CD4-positive, alpha-beta memory T cell (primary cell): ENCODE measurements at regions of chr19 and their contacts with region 1.

Region 1: GRCh38 chr19:16185123-16185767 is at the start of gene FAM32A:
- DNase-seq: peak; percentile 98 to 99 (median 99)
- H3K4me3 ChIP-seq: peak within 1 kb of the TSS; percentile 84 to 86
- H3K4me3 Mint-ChIP-seq: peak within 1 kb of the TSS; percentile 97 to 100 (median 99)
- H3K27ac ChIP-seq: peak within 1 kb of the TSS; percentile 83
- H3K27ac Mint-ChIP-seq: peak within 1 kb of the TSS; percentile 95 to 99 (median 96)
- H3K4me1 ChIP-seq: peaks cover 43% of the 10 kb centered on the region
- H3K4me1 Mint-ChIP-seq: peaks cover 20 to 43% (median 31%) of the 10 kb centered on the region in 4 donors
- H3K27me3 ChIP-seq: no peaks in the 10 kb centered on the region
- H3K27me3 Mint-ChIP-seq: peaks cover 0 to 2% of the 10 kb centered on the region in 2 donors
- total RNA-seq, gene FAM32A: 50.9 to 51.7 TPM

Region 2: DNA sequence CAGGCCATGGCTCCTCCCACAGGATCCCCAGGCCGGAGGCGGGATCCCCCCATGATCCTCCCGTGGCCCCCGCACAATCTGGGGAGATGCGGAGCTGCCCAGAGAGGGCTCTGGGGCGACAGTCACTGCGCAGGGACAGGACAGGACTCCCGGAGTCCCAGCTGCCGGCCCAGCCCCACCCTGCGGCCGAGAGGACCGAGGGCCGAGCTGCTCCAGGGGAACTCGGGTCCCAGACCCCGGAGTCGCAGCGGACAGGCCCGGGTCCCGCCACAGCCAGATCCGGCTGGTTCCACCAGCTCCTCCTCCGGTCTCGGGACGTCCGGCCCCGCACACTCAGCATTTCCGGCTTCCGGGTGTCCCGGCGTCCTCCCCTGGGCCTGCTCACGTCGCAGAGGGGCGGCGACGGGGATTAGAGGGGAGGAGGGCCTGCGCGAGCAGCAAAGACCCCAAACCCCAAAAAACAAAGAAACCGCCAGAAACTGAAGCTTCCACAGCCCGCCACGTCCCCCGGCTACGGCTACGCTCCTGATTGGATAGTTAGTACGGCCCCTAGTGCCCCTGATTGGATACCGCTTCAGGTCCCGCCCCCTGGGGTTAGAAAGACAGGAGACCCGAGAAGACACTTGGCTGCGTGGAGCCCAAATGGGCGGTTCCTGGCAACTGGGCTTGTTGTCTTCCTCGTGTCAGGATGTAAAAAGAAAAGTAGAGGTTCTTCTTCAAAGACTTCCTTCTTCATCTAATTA is 348.5 kb before region 1 on chr19:
- CTCF ChIA-PET with region 1: no interaction called
- POLR2A ChIA-PET with region 1: interaction called, 15 read pairs
- intact Hi-C with region 1: loop called (anchors 2 kb)
- DNase-seq: peak; percentile 95 to 98 (median 96)
- H3K4me3 ChIP-seq: peak overlapping the region; percentile 63 to 69
- H3K4me3 Mint-ChIP-seq: peak overlapping the region; percentile 92 to 99 (median 96)
- H3K27ac ChIP-seq: peak overlapping the region; percentile 94
- H3K27ac Mint-ChIP-seq: peak overlapping the region; percentile 89 to 100 (median 98)
- H3K4me1 ChIP-seq: peaks cover 29% of the 10 kb centered on the region
- H3K4me1 Mint-ChIP-seq: peaks cover 17 to 36% (median 26%) of the 10 kb centered on the region in 4 donors
- H3K27me3 ChIP-seq: no peaks in the 10 kb centered on the region
- H3K27me3 Mint-ChIP-seq: no peaks in the 10 kb centered on the region

Region 3: GRCh38 chr19:16041299-16041990 is 143.8 kb before region 1 on chr19:
- CTCF ChIA-PET with region 1: interaction called, 27 read pairs
- POLR2A ChIA-PET with region 1: interaction called, 4 read pairs
- intact Hi-C with region 1: loop called (anchors 1 kb)
- DNase-seq: peak; percentile 60 to 75 (median 66)
- H3K4me3 ChIP-seq: no peak overlapping the region
- H3K4me3 Mint-ChIP-seq: peak overlapping the region in 6 of 8 donors; percentile 7 to 63 (median 29)
- H3K27ac ChIP-seq: no peak overlapping the region
- H3K27ac Mint-ChIP-seq: peak overlapping the region in 1 of 7 donors; percentile 29
- H3K4me1 ChIP-seq: peaks cover 10% of the 10 kb centered on the region
- H3K4me1 Mint-ChIP-seq: peaks cover 7 to 17% (median 12%) of the 10 kb centered on the region in 4 donors
- H3K27me3 ChIP-seq: no peaks in the 10 kb centered on the region
- H3K27me3 Mint-ChIP-seq: peaks cover 0 to 1% of the 10 kb centered on the region in 2 donors

Region 4: DNA sequence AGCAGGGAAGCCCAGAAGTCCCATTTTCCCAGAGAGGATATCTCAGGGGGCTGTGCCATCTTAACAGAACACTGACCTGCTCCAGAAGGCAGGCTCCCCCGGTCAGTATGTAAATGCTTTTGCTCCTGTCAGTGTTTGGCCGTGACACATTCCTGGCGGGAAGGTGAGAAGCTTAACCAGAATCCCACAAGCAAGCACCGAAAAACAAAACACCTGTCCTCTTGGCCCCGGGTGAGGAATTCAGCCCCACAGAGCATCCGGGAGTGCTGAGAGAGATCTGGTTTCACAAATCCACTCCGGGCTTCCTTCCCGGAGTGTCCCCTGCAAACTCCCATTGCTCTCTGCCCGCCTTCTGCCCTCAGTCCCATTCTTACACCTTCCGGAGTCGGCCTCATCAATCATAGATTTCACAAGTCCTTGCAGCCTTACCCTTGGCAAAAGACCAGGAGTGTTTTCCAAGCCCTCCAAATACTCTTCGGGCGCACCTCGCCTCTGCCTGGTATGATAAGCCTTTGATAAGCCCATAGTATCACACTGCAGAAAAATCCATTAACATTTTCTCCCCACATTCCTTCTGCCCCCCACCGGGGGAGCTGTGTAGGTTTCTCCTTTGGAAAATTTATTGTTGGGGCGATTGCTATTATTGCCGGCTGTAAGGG is 96.8 kb before region 1 on chr19:
- CTCF ChIA-PET with region 1: interaction called, 15 read pairs
- POLR2A ChIA-PET with region 1: interaction called, 8 read pairs
- intact Hi-C with region 1: no loop called
- DNase-seq: peak in 1 of 5 donors; percentile 10
- H3K4me3 ChIP-seq: no peak overlapping the region
- H3K4me3 Mint-ChIP-seq: peak overlapping the region in 4 of 8 donors; percentile 15 to 54 (median 34)
- H3K27ac ChIP-seq: no peak overlapping the region
- H3K27ac Mint-ChIP-seq: peak overlapping the region; percentile 61 to 82 (median 72)
- H3K4me1 ChIP-seq: peaks cover 53% of the 10 kb centered on the region
- H3K4me1 Mint-ChIP-seq: peaks cover 27 to 58% (median 36%) of the 10 kb centered on the region in 4 donors
- H3K27me3 ChIP-seq: no peaks in the 10 kb centered on the region
- H3K27me3 Mint-ChIP-seq: no peaks in the 10 kb centered on the region

Region 5: DNA sequence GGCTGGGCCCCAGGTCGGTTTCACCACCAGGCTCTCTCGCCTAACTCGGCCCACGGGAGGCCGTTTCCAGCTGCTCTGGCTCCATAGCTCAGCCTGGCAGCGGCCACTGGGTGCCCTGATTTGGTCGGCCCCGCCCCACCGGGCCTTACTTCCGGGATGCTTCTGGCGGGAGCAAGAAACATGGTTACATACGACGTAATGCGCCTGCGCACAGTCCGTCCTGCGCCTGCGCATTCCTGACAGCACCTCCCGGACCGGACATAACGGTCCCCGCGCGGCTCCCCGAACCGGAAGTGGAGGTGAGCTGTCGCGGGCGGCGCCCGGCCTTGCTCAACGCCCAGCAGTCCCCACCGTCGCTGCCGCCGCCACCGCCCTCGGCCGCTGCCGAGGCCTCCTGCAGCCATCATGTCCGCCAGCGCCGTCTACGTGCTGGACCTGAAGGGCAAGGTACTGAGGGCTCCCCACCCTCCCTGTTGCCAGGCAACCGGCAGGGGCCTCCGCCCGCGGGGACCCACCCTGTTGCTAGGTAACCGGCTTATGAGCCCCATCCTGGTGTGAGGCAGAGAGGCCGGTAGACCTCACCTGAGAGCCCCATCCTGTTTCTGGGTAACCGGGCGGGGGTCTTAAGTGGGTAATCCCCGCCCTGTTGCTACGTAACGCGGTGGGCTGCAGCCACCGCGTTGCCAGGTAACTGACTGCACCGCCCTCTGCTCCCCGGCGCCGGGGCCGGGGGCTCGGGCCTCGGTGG is 12.6 kb after region 1 on chr19 and contains the start of gene AP1M1:
- CTCF ChIA-PET with region 1: interaction called, 36 read pairs
- POLR2A ChIA-PET with region 1: interaction called, 35 read pairs
- intact Hi-C with region 1: loop called (anchors 1 kb)
- DNase-seq: peak; percentile 97 to 98 (median 98)
- H3K4me3 ChIP-seq: peak within 1 kb of the TSS; percentile 70 to 88
- H3K4me3 Mint-ChIP-seq: peak within 1 kb of the TSS; percentile 87 to 95 (median 90)
- H3K27ac ChIP-seq: peak within 1 kb of the TSS; percentile 90
- H3K27ac Mint-ChIP-seq: peak within 1 kb of the TSS; percentile 95 to 99 (median 98)
- H3K4me1 ChIP-seq: peaks cover 27% of the 10 kb centered on the region
- H3K4me1 Mint-ChIP-seq: peaks cover 25 to 53% (median 40%) of the 10 kb centered on the region in 4 donors
- H3K27me3 ChIP-seq: no peaks in the 10 kb centered on the region
- H3K27me3 Mint-ChIP-seq: no peaks in the 10 kb centered on the region
- total RNA-seq, gene AP1M1: 107 TPM

Region 6: GRCh38 chr19:16345457-16345856 is 160.2 kb after region 1 on chr19:
- CTCF ChIA-PET with region 1: no interaction called
- POLR2A ChIA-PET with region 1: no interaction called
- intact Hi-C with region 1: no loop called
- DNase-seq: no peak
- H3K4me3 ChIP-seq: no peak overlapping the region
- H3K4me3 Mint-ChIP-seq: no peak overlapping the region
- H3K27ac ChIP-seq: no peak overlapping the region
- H3K27ac Mint-ChIP-seq: peak overlapping the region in 1 of 7 donors; percentile 18
- H3K4me1 ChIP-seq: peaks cover 36% of the 10 kb centered on the region
- H3K4me1 Mint-ChIP-seq: peaks cover 22 to 49% (median 28%) of the 10 kb centered on the region in 4 donors
- H3K27me3 ChIP-seq: no peaks in the 10 kb centered on the region
- H3K27me3 Mint-ChIP-seq: no peaks in the 10 kb centered on the region

Region 7: DNA sequence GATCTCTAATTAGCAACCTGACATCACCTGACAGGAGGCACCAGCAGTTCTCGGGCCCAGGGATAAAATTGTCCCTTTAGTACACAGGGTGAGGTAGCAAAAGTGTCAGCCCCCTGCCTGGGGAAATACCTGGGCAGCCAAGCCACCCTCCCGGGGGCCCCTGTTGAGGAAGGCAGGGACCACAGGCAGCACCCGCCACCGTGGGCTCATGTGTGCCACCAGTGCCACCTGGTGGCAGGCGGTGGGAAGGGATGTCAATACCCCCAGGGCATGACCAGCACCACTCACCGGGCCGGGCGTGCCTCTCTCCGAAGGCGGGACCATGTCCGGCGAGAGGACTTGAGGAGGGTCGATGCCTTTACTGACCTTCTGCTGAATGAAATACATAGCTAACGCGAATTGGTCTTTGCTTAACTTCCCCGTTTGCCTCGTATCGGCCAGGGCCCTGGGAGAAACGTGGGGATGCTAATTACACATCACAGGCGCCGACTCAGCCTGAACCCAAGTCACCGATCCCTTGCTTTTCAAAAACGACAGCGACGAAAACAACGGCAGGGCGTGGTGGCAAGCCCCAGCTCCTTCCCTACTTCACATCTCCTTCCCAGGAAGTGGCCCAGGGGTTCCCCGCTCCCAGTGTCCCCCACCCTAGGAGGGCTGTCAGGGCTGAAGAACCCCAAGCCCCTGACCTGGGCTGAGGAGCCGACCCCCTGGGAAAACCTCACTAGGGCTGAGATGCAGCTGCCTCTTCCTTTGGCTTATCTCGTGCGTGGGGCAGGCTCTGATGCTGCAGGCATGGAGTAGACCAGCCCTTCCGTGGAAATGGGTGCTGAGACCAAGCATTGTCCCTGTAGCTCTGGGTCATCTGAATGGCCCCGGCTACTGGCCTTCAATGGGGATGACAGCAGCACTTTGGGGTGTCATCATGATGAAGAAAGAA is 232.7 kb after region 1 on chr19:
- CTCF ChIA-PET with region 1: interaction called, 8 read pairs
- POLR2A ChIA-PET with region 1: no interaction called
- intact Hi-C with region 1: loop called (anchors 1 kb)
- DNase-seq: peak; percentile 62 to 72 (median 66)
- H3K4me3 ChIP-seq: no peak overlapping the region
- H3K4me3 Mint-ChIP-seq: no peak overlapping the region
- H3K27ac ChIP-seq: no peak overlapping the region
- H3K27ac Mint-ChIP-seq: peak overlapping the region in 5 of 7 donors; percentile 32 to 66 (median 57)
- H3K4me1 ChIP-seq: peaks cover 7% of the 10 kb centered on the region
- H3K4me1 Mint-ChIP-seq: peaks cover 1 to 13% (median 4%) of the 10 kb centered on the region in 4 donors
- H3K27me3 ChIP-seq: no peaks in the 10 kb centered on the region
- H3K27me3 Mint-ChIP-seq: no peaks in the 10 kb centered on the region